Pancreas (tissue), 10 donors: ENCODE measurements at regions of chr15 and their contacts with region 1.

Region 1: GRCh38 chr15:84755736-84756527 is 7.5 kb downstream of the ZNF592 start:
- DNase-seq: no peak
- ATAC-seq: no peak
- H3K4me3 ChIP-seq: no peak overlapping the region
- H3K27ac ChIP-seq: peak overlapping the region in 1 of 4 donors; percentile 23
- H3K4me1 ChIP-seq: peaks cover 43 to 51% (median 45%) of the 10 kb centered on the region in 3 donors
- H3K27me3 ChIP-seq: no peaks in the 10 kb centered on the region
- CTCF ChIP-seq: no peak

Region 2: DNA sequence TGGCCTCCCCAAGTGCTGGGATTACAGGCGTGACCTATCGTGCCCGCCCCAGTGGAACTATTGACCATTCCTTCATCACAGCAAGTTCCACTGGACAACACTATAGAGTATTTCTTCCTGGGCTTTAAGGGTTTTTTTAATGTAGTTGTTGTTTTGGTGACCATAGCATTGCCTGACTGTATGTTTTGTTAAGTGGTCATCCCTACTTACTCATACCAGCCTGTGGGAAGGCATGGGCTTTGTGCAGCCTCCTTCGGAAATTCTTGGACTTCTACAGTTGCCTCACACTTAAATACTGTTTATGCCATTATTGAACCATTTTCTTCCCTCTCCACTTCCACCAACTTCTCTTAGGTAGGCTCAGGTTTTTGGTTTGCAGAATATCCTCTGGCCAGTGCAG is 41.3 kb after region 1 on chr15:
- intact Hi-C with region 1: loop called in 1 of 3 experiments (anchors 5 kb)
- DNase-seq: no peak
- ATAC-seq: no peak
- H3K4me3 ChIP-seq: no peak overlapping the region
- H3K27ac ChIP-seq: no peak overlapping the region
- H3K4me1 ChIP-seq: no peaks in the 10 kb centered on the region
- H3K27me3 ChIP-seq: no peaks in the 10 kb centered on the region
- CTCF ChIP-seq: no peak